IMR-90 (cell line): ENCODE measurements at regions of chr15 and their contacts with region 1.

Region 1: DNA sequence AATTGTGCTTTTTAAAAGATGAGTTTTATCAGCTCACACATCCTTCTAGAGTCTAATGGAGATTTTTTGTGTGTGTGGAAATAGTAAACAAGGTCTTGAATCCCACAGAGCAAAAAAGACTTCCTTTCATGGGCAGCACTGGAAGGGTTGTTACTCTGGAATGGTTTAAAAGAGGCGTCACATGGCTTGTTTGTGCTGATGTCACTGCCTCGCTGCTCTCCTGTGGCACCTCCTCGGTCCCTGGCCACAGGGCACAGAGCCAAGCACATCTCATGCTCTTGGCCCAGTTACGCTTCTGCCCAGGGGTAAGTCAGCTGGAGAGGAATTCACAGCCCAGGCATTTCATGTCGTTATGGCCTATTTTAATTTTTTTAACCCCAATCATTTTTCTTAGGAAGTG is 53.2 kb downstream of the PGPEP1L start:
- DNase-seq: peak; percentile 88
- ATAC-seq: peak; percentile 93
- H3K4me3 ChIP-seq: no peak overlapping the region
- H3K27ac ChIP-seq: peak overlapping the region; percentile 72
- H3K4me1 ChIP-seq: peaks cover 28% of the 10 kb centered on the region
- H3K27me3 ChIP-seq: no peaks in the 10 kb centered on the region
- CTCF ChIP-seq: no peak
- POLR2A ChIP-seq: no peak
- RAD21 ChIP-seq: no peak

Region 2: GRCh38 chr15:98983333-98983732 is 28.9 kb after region 1 on chr15:
- CTCF ChIA-PET with region 1: no interaction called
- POLR2A ChIA-PET with region 1: no interaction called
- dilution Hi-C with region 1: no loop called
- in situ Hi-C with region 1: no loop called
- intact Hi-C with region 1: loop called (anchors 1 kb)
- DNase-seq: peak; percentile 84
- ATAC-seq: peak; percentile 82
- H3K4me3 ChIP-seq: no peak overlapping the region
- H3K27ac ChIP-seq: no peak overlapping the region
- H3K4me1 ChIP-seq: peaks cover 8% of the 10 kb centered on the region
- H3K27me3 ChIP-seq: peaks cover 1% of the 10 kb centered on the region; the same call in 1 of the 2 replicates
- CTCF ChIP-seq: no peak
- POLR2A ChIP-seq: no peak
- RAD21 ChIP-seq: no peak